ENCODE measurements at regions of chr9 and their contacts with region 1.

Region 1: GRCh38 chr9:34252670-34253459 is 74.0 kb downstream of the UBAP1 start:
- DNase-seq: peak; percentile 54
- ATAC-seq: peak; percentile 71
- H3K4me3 ChIP-seq: no peak overlapping the region
- H3K27ac ChIP-seq: no peak overlapping the region
- H3K4me1 ChIP-seq: peaks cover 25% of the 10 kb centered on the region
- H3K27me3 ChIP-seq: no peaks in the 10 kb centered on the region
- CTCF ChIP-seq: peak; percentile 81
- POLR2A ChIP-seq: no peak
- RAD21 ChIP-seq: peak; percentile 64

Region 2: GRCh38 chr9:33988219-33988890 is 264.5 kb before region 1 on chr9:
- CTCF ChIA-PET with region 1: no interaction called
- POLR2A ChIA-PET with region 1: no interaction called
- dilution Hi-C with region 1: no loop called
- in situ Hi-C with region 1: no loop called
- intact Hi-C with region 1: no loop called
- DNase-seq: peak; percentile 43
- ATAC-seq: peak; percentile 71
- H3K4me3 ChIP-seq: no peak overlapping the region
- H3K27ac ChIP-seq: no peak overlapping the region
- H3K4me1 ChIP-seq: peaks cover 3% of the 10 kb centered on the region
- H3K27me3 ChIP-seq: no peaks in the 10 kb centered on the region
- CTCF ChIP-seq: no peak
- POLR2A ChIP-seq: no peak
- RAD21 ChIP-seq: no peak

Region 3: DNA sequence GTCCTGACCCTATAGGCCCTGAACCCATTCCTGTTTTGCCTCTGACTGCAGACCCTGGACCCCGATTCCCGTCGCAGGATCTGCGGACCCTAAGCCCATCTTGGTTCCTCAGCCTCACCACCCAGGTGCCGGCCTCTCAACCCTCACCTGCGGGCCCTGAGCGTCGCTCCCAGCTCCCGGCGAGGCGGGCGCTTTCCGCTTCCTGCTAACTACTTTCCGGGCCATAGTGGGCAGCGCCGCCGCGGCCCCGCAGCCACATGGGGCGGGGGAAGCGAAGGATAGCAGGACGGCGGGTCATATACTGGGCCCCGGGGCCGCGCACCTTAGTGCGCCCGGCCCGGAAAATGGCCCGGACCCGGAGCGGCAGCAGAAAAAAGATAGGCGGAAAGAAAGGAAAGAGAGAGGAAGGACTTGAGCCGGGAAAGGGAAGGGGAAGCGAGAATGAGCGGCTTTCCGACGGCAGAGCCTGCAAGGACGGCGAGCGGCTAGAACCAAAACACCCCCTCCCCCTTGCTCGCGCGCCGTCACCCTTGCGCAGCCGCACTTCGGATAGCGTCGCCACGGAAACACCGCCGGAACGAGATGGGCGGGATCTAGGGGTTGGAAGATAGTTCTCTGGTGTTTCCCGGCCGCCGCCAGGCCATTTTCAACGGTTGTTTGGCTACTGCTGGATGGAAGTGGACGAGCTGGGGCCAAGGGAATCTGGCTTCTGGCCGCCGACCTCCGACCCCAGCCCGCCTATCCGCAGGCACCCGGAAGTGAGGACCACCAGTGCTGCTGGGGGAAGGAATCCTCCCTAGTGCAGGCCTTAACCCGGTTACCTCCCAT is 126.4 kb before region 1 on chr9 and contains the start of gene DCAF12:
- CTCF ChIA-PET with region 1: interaction called, 3 read pairs
- POLR2A ChIA-PET with region 1: no interaction called
- dilution Hi-C with region 1: no loop called
- in situ Hi-C with region 1: loop called (anchors 5 kb)
- intact Hi-C with region 1: loop called (anchors 1 kb)
- DNase-seq: peak; percentile 87
- ATAC-seq: peak; percentile 96
- H3K4me3 ChIP-seq: peak within 1 kb of the TSS; percentile 64
- H3K27ac ChIP-seq: peak within 1 kb of the TSS; percentile 96
- H3K4me1 ChIP-seq: peaks cover 8% of the 10 kb centered on the region
- H3K27me3 ChIP-seq: no peaks in the 10 kb centered on the region
- CTCF ChIP-seq: no peak
- POLR2A ChIP-seq: peak; percentile 70
- RAD21 ChIP-seq: no peak; the same call in 1 of the 2 replicates
- total RNA-seq, gene DCAF12: 6.9 and 7.2 TPM in 2 replicates

Region 4: DNA sequence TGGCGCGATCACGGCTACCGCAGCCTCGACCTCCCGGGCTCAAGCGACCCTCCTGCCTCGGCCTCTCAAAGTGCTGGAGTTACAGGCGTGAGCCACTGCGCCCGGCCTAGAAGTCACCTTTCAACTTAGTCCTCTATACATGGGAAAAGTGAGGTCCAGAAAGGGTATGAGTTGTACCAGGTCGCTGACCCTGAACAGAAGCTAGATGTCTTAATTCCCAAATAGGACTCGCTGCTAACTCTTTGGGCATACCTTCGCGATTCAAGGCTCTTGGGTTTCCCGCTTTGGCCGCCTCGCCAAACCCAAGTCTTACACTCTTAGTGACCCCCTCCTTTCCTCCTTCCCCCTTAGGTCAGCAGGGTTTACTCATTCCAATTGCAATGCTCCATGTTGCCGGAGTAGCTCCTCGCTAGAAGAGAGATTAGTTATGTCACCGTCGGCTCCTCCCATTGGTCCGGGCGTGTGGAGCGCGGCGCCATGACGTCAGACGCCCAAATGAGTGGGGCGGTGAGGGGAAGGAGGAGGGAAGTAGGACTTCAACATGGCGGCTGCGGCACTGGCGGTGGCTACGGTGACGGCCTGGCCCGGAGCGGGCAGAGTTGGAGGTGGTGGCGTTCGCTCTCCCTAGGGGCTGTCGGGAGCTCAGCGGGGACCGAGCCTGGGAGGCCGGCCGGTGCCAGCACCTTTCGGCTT is 74.2 kb before region 1 on chr9 and contains the start of gene UBAP1:
- CTCF ChIA-PET with region 1: interaction called, 6 read pairs
- POLR2A ChIA-PET with region 1: no interaction called
- dilution Hi-C with region 1: no loop called
- in situ Hi-C with region 1: no loop called
- intact Hi-C with region 1: loop called (anchors 2 kb)
- DNase-seq: peak; percentile 97
- ATAC-seq: peak; percentile 99
- H3K4me3 ChIP-seq: peak within 1 kb of the TSS; percentile 64
- H3K27ac ChIP-seq: peak within 1 kb of the TSS; percentile 93
- H3K4me1 ChIP-seq: no peaks in the 10 kb centered on the region
- H3K27me3 ChIP-seq: no peaks in the 10 kb centered on the region
- CTCF ChIP-seq: no peak
- POLR2A ChIP-seq: peak; percentile 92
- RAD21 ChIP-seq: no peak
- total RNA-seq, gene UBAP1: 28.3 and 30.6 TPM in 2 replicates

Region 5: DNA sequence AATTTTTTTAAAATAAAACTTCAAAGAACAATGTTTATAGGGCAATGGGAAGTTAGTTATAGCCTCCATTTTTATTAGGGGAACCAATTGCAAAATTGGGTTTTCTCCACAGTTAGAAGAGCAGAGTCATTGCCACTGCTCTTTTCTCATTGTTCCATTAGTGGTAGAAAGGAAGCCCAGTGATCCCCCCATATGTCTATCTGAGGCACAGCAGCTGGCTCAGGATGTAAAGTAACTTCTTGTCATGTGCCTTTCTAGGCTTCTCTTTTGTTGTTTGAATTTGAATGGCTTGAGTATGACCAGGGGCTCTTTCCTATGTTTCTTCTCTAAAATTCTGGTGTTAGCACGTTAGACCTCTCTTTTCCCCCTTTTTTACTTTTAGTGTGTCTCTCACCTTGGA is 12.9 kb before region 1 on chr9:
- CTCF ChIA-PET with region 1: interaction called, 12 read pairs
- POLR2A ChIA-PET with region 1: no interaction called
- dilution Hi-C with region 1: no loop called
- in situ Hi-C with region 1: no loop called
- intact Hi-C with region 1: no loop called
- DNase-seq: no peak
- ATAC-seq: no peak
- H3K4me3 ChIP-seq: no peak overlapping the region
- H3K27ac ChIP-seq: no peak overlapping the region
- H3K4me1 ChIP-seq: no peaks in the 10 kb centered on the region
- H3K27me3 ChIP-seq: no peaks in the 10 kb centered on the region
- CTCF ChIP-seq: no peak
- POLR2A ChIP-seq: no peak
- RAD21 ChIP-seq: no peak

Region 6: DNA sequence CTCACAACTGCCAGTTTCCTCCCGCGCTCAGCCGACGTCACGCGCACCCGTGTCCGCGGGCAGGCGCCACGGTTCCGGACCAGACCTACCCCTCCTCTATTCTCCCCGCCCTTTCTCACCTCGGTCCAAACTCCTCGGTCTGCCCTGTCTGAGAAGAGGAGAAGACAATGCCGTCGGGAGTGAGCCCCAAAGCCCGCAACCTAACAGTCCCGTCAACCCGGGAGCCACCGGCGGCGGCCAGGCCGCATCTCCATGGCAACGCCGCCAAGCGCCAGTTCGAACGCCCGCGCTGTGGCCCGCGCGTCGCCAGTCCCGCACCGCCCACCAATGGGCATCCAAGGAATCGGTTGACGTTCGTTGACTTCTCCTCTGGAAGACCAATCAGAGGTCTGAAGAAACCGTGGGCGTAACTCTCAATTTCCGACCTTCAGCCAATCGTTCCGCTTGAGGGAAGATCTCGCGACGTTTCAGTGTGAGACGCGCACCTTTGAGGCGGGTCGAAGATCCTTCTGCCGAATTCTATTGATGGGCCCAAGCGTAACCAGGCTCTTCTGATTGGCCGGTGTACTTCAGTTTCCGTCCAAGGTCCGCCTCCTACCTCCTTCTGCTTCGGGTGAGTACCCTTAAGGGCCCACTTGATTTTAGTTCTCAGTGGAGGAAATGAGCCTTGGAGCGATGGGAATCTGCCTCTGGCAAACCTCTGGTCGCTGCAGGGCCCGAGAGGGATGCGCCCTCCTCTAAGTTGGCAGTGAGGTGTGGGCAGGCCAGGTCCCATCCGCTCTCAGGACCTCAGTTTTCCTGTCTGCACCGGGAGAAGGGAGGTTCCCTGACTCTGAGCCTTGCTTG is 76.3 kb after region 1 on chr9 and contains the starts of genes KIF24 and NUDT2:
- CTCF ChIA-PET with region 1: interaction called, 3 read pairs
- POLR2A ChIA-PET with region 1: no interaction called
- dilution Hi-C with region 1: no loop called
- in situ Hi-C with region 1: no loop called
- intact Hi-C with region 1: loop called (anchors 2 kb)
- DNase-seq: peak; percentile 100
- ATAC-seq: peak; percentile 95
- H3K4me3 ChIP-seq: peak within 1 kb of the TSS; percentile 80
- H3K27ac ChIP-seq: peak within 1 kb of the TSS; percentile 93
- H3K4me1 ChIP-seq: peaks cover 8% of the 10 kb centered on the region
- H3K27me3 ChIP-seq: no peaks in the 10 kb centered on the region
- CTCF ChIP-seq: 0 out of 2 replicates have a peak, but pooled peaks have one; percentile 6
- POLR2A ChIP-seq: peak; percentile 94
- RAD21 ChIP-seq: no peak
- total RNA-seq, gene KIF24: 2.5 and 3.0 TPM in 2 replicates
- total RNA-seq, gene NUDT2: 33.9 and 45.0 TPM in 2 replicates

Region 7: GRCh38 chr9:34376596-34377403 is 123.9 kb after region 1 on chr9 and contains the start of gene MYORG:
- CTCF ChIA-PET with region 1: no interaction called
- POLR2A ChIA-PET with region 1: no interaction called
- dilution Hi-C with region 1: no loop called
- in situ Hi-C with region 1: no loop called
- intact Hi-C with region 1: loop called (anchors 2 kb)
- DNase-seq: peak; percentile 65
- ATAC-seq: peak; percentile 84
- H3K4me3 ChIP-seq: peak within 1 kb of the TSS; percentile 54
- H3K27ac ChIP-seq: no peak within 1 kb of the TSS
- H3K4me1 ChIP-seq: peaks cover 8% of the 10 kb centered on the region
- H3K27me3 ChIP-seq: peaks cover 17% of the 10 kb centered on the region; the same call in 1 of the 2 replicates
- CTCF ChIP-seq: no peak
- POLR2A ChIP-seq: no peak
- RAD21 ChIP-seq: no peak
- total RNA-seq, gene MYORG: 0.36 and 0.56 TPM in 2 replicates

Region 8: GRCh38 chr9:35205340-35205739 is 952.5 kb after region 1 on chr9:
- CTCF ChIA-PET with region 1: no interaction called
- POLR2A ChIA-PET with region 1: no interaction called
- dilution Hi-C with region 1: no loop called
- in situ Hi-C with region 1: no loop called
- intact Hi-C with region 1: no loop called
- DNase-seq: no peak
- ATAC-seq: no peak
- H3K4me3 ChIP-seq: no peak overlapping the region
- H3K27ac ChIP-seq: no peak overlapping the region
- H3K4me1 ChIP-seq: no peaks in the 10 kb centered on the region
- H3K27me3 ChIP-seq: no peaks in the 10 kb centered on the region
- CTCF ChIP-seq: no peak
- POLR2A ChIP-seq: no peak
- RAD21 ChIP-seq: no peak